PC-9 (cell line): ENCODE measurements at regions of chr15 and their contacts with region 1.

Region 1: DNA sequence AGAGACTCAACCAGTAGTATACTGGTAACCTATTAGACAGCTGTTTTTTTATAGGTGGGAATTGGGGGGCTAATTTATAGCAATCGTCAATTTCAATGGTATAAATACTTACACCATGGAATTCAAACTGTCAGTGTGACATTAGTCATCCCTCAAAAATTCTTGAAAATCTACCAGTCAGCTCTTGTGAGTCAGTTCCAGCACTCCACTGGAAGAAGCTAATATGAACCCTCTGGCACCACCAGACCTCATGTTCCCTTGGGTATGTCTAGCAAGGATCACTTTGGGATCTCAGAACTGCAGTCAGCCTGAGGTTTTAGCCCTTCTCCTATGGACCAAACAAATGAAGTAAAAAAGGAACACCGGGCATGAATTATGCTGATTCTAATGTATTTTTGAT is 11.8 kb upstream of the UACA start:
- DNase-seq: peak in 1 of 2 experiments; percentile 40
- H3K4me3 ChIP-seq: no peak overlapping the region
- H3K27ac ChIP-seq: no peak overlapping the region
- H3K4me1 ChIP-seq: peaks cover 39% of the 10 kb centered on the region
- H3K27me3 ChIP-seq: no peaks in the 10 kb centered on the region
- CTCF ChIP-seq: no peak

Region 2: GRCh38 chr15:70281811-70282307 is 493.3 kb before region 1 on chr15:
- CTCF ChIA-PET with region 1: no interaction called
- POLR2A ChIA-PET with region 1: no interaction called
- intact Hi-C with region 1: no loop called
- DNase-seq: no peak
- H3K4me3 ChIP-seq: no peak overlapping the region
- H3K27ac ChIP-seq: no peak overlapping the region
- H3K4me1 ChIP-seq: peaks cover 10% of the 10 kb centered on the region
- H3K27me3 ChIP-seq: no peaks in the 10 kb centered on the region
- CTCF ChIP-seq: no peak

Region 3: GRCh38 chr15:70535071-70535954 is 239.8 kb before region 1 on chr15:
- CTCF ChIA-PET with region 1: no interaction called
- POLR2A ChIA-PET with region 1: no interaction called
- intact Hi-C with region 1: no loop called
- DNase-seq: no peak
- H3K4me3 ChIP-seq: no peak overlapping the region
- H3K27ac ChIP-seq: no peak overlapping the region
- H3K4me1 ChIP-seq: peaks cover 13% of the 10 kb centered on the region
- H3K27me3 ChIP-seq: no peaks in the 10 kb centered on the region
- CTCF ChIP-seq: no peak

Region 4: GRCh38 chr15:70670680-70671079 is 104.5 kb before region 1 on chr15:
- CTCF ChIA-PET with region 1: no interaction called
- POLR2A ChIA-PET with region 1: no interaction called
- intact Hi-C with region 1: no loop called
- DNase-seq: no peak
- H3K4me3 ChIP-seq: no peak overlapping the region
- H3K27ac ChIP-seq: no peak overlapping the region
- H3K4me1 ChIP-seq: no peaks in the 10 kb centered on the region
- H3K27me3 ChIP-seq: no peaks in the 10 kb centered on the region
- CTCF ChIP-seq: peak; percentile 33; the same call in 1 of the 2 replicates

Region 5: DNA sequence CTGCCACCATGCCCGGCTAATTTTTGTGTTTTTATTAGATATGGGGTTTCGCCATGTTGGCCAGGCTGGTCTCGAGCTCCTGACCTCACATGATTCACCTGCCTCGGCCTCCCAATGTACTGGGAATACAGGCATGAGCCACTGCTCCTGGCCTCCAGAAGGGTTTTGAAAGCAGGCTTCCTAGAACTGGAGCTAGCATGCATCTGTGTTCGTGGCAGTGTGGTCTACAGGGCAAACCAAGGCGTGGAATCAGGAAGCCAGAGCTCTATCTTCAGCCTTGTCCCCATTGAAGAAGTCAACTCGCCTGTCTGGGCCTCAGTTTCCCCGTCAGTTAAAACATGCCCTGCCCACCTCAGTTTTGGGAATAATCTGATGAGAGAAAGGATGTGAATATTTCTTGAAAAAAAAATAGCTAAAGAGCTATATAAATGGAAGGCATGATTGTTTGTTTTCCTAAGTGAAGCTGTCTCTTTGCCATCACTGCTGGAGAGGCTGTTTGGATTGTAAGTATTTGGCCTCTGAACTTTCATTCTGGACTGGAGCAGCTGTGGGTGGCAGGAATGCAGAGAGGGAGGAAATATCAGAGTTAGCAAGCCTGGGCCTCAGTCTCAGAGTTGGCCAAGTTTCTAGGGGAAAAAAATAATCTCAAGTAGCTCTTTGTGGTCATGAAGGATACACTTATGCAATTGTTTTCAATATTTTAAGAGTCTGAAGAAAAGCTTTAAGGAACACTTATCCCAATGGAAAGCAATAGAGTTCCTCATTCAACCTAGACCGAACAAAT is 24.7 kb after region 1 on chr15:
- CTCF ChIA-PET with region 1: no interaction called
- POLR2A ChIA-PET with region 1: interaction called, 10 read pairs
- intact Hi-C with region 1: no loop called
- DNase-seq: peak; percentile 35 to 48
- H3K4me3 ChIP-seq: no peak overlapping the region
- H3K27ac ChIP-seq: no peak overlapping the region
- H3K4me1 ChIP-seq: peaks cover 22% of the 10 kb centered on the region
- H3K27me3 ChIP-seq: no peaks in the 10 kb centered on the region
- CTCF ChIP-seq: no peak

Region 6: GRCh38 chr15:70810916-70811578 is 35.9 kb after region 1 on chr15:
- CTCF ChIA-PET with region 1: no interaction called
- POLR2A ChIA-PET with region 1: no interaction called
- intact Hi-C with region 1: no loop called
- DNase-seq: no peak
- H3K4me3 ChIP-seq: no peak overlapping the region
- H3K27ac ChIP-seq: no peak overlapping the region
- H3K4me1 ChIP-seq: no peaks in the 10 kb centered on the region
- H3K27me3 ChIP-seq: no peaks in the 10 kb centered on the region
- CTCF ChIP-seq: no peak